Right ventricle myocardium inferior (tissue), 1 donor: ENCODE measurements at regions of chr17 and their contacts with region 1.

Region 1: GRCh38 chr17:63919311-63919723 is 678 bp upstream of the GH1 start:
- DNase-seq: no peak
- ATAC-seq: peak; percentile 65

Region 2: GRCh38 chr17:63946440-63947367 is 27.4 kb after region 1 on chr17:
- intact Hi-C with region 1: loop called (anchors 2 kb)
- DNase-seq: peak; percentile 63
- ATAC-seq: peak; percentile 55

Region 3: GRCh38 chr17:63993368-63993985 is 74.2 kb after region 1 on chr17:
- intact Hi-C with region 1: loop called (anchors 1 kb)
- DNase-seq: no peak
- ATAC-seq: no peak

Region 4: DNA sequence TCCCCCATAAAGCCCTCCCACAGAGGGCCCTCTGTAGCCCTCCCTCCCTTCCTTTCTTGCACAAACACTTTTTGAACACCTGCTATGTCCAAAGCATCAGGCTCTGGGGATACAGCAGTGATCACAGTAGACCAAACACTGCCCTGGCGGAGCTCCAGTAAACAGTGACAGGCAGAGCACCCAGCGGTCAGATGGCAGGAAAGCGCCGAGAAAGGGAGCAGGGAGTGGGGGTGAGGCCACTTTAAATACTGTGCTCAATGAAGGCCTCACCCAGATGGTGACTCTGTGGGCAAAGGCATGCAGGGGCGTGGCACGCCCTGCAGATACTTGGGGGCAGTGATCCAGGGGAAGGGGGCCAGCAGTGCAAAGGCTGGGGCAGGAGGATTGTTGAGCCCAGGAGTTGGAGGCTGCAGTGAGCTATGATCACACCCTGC is 86.4 kb after region 1 on chr17:
- intact Hi-C with region 1: no loop called
- DNase-seq: no peak
- ATAC-seq: no peak

Region 5: GRCh38 chr17:64025732-64026294 is 106.5 kb after region 1 on chr17:
- intact Hi-C with region 1: loop called (anchors 2 kb)
- DNase-seq: peak; percentile 86
- ATAC-seq: peak; percentile 61